ENCODE measurements at regions of chr3 and their contacts with region 1.

Region 1: DNA sequence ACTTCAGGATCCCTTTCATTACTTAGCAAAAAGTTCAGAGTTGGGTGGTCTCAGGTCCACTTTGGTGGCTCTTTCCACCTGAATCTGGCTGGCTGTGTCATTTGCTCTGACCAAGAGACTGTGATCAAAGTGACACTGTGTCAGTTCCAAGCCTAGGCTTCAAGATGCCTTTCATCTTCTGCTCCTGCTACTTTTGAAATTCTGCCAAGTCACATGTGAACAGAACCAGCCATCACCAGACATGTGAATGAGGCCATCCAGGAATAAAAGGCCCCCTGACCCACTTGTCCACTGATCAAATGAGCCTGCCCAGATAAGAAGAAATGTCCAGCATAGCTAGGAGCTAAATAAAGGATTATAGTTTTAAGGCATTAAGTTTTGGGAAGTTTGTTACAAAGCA is 132.2 kb downstream of the OSBPL10 start:
- DNase-seq: no peak
- ATAC-seq: no peak
- H3K4me3 ChIP-seq: no peak overlapping the region
- H3K27ac ChIP-seq: no peak overlapping the region
- H3K4me1 ChIP-seq: no peaks in the 10 kb centered on the region
- H3K27me3 ChIP-seq: no peaks in the 10 kb centered on the region
- CTCF ChIP-seq: no peak
- POLR2A ChIP-seq: no peak

Region 2: DNA sequence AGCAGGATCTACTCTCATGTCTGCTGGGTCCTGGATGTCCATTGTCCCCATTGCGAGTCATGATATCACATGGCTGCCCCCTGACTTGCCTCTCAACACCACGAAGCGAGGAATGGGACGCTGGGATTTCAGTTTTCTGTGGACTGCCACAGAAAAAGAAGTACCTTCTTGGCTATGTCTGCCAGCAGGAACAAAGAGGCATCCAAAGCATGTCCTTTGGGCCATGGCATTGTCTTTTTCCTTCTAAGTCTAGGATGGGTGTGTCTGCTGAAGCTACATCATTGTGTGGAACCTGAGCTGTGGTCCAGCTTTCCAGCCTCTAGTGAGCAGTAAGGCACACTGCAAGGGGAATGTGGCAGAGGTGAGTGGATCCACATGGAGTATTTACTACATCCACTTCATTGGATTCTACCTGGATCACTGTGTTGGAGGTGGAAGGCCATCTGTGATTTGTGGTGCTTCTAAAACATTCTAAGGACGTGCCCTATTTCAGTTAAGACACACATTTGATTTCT is 413.2 kb after region 1 on chr3:
- in situ Hi-C with region 1: no loop called
- intact Hi-C with region 1: loop called (anchors 10 kb)
- DNase-seq: no peak
- ATAC-seq: no peak
- H3K4me3 ChIP-seq: no peak overlapping the region
- H3K27ac ChIP-seq: no peak overlapping the region
- H3K4me1 ChIP-seq: no peaks in the 10 kb centered on the region
- H3K27me3 ChIP-seq: no peaks in the 10 kb centered on the region
- CTCF ChIP-seq: no peak
- POLR2A ChIP-seq: no peak

Region 3: DNA sequence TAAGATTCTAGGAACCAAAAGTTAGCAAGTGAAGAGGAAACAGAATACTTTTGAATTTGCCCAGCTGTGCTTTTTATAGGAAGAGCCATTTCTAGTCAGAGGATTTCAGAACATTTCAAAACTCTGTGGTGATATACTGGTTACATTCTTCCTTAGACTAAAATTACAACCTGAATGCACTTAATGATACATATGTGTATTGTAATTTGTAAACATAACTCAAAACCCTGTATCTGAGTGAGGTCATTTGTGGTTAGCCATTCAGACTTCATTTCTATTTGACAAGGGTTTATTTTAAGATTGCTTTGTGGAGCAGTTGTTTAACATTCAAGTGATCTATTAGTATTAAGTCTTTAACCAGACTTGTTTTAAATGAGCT is 909.5 kb after region 1 on chr3:
- in situ Hi-C with region 1: no loop called
- intact Hi-C with region 1: no loop called
- DNase-seq: no peak
- ATAC-seq: no peak
- H3K4me3 ChIP-seq: no peak overlapping the region
- H3K27ac ChIP-seq: no peak overlapping the region
- H3K4me1 ChIP-seq: peaks cover 4 to 9% of the 10 kb centered on the region in 2 donors
- H3K27me3 ChIP-seq: no peaks in the 10 kb centered on the region
- CTCF ChIP-seq: no peak
- POLR2A ChIP-seq: no peak

Measured in gastrocnemius medialis (tissue), 4 donors.